IMR-90 (cell line): ENCODE measurements at regions of chr1 and their contacts with region 1.

Region 1: GRCh38 chr1:56578963-56579875 is at the start of gene PLPP3:
- DNase-seq: peak; percentile 94
- ATAC-seq: peak; percentile 89
- H3K4me3 ChIP-seq: peak within 1 kb of the TSS; percentile 81
- H3K27ac ChIP-seq: peak within 1 kb of the TSS; percentile 79
- H3K4me1 ChIP-seq: peaks cover 2% of the 10 kb centered on the region
- H3K27me3 ChIP-seq: no peaks in the 10 kb centered on the region
- CTCF ChIP-seq: peak; percentile 61
- POLR2A ChIP-seq: peak; percentile 90
- RAD21 ChIP-seq: peak; percentile 59
- total RNA-seq, gene PLPP3: 46.4 and 56.6 TPM in 2 replicates

Region 2: GRCh38 chr1:55277377-55278130 is 1301.7 kb before region 1 on chr1:
- CTCF ChIA-PET with region 1: interaction called, 3 read pairs
- POLR2A ChIA-PET with region 1: no interaction called
- dilution Hi-C with region 1: loop called (anchors 25 kb)
- in situ Hi-C with region 1: no loop called
- intact Hi-C with region 1: no loop called
- DNase-seq: peak; percentile 78
- ATAC-seq: peak; percentile 93
- H3K4me3 ChIP-seq: no peak overlapping the region
- H3K27ac ChIP-seq: no peak overlapping the region
- H3K4me1 ChIP-seq: peaks cover 6% of the 10 kb centered on the region; the same call in 1 of the 2 replicates
- H3K27me3 ChIP-seq: no peaks in the 10 kb centered on the region
- CTCF ChIP-seq: peak; percentile 82
- POLR2A ChIP-seq: no peak
- RAD21 ChIP-seq: peak; percentile 87

Region 3: GRCh38 chr1:55735106-55735505 is 844.1 kb before region 1 on chr1:
- CTCF ChIA-PET with region 1: no interaction called
- POLR2A ChIA-PET with region 1: no interaction called
- dilution Hi-C with region 1: no loop called
- in situ Hi-C with region 1: loop called (anchors 10 kb)
- intact Hi-C with region 1: no loop called
- DNase-seq: no peak
- ATAC-seq: peak; percentile 56
- H3K4me3 ChIP-seq: no peak overlapping the region
- H3K27ac ChIP-seq: peak overlapping the region; percentile 41; the same call in 1 of the 2 replicates
- H3K4me1 ChIP-seq: peaks cover 3% of the 10 kb centered on the region; the same call in 1 of the 2 replicates
- H3K27me3 ChIP-seq: no peaks in the 10 kb centered on the region
- CTCF ChIP-seq: no peak
- POLR2A ChIP-seq: no peak
- RAD21 ChIP-seq: no peak

Region 4: DNA sequence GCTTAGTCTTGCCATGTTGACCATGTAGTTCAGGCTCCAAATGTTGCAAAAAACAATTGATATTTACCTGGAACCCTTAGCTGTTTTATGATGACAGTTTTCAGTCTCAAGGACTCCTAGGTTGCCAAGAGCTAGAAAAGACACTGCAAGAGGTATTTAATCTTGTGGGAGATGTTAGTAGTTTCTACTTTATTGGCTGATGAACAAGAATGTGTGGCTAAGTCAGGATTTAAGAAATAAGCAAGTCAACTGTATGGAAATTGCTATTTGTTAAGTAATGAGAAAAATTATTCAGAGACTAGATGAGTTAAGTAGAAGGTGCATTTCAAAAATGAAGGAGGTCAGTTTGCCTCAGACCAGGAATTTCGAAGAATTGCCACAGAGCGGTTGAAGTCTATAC is 724.3 kb before region 1 on chr1:
- CTCF ChIA-PET with region 1: interaction called, 3 read pairs
- POLR2A ChIA-PET with region 1: no interaction called
- dilution Hi-C with region 1: no loop called
- in situ Hi-C with region 1: no loop called
- intact Hi-C with region 1: loop called (anchors 10 kb)
- DNase-seq: peak; percentile 54
- ATAC-seq: peak; percentile 79
- H3K4me3 ChIP-seq: no peak overlapping the region
- H3K27ac ChIP-seq: peak overlapping the region; percentile 71; the same call in 1 of the 2 replicates
- H3K4me1 ChIP-seq: peaks cover 9% of the 10 kb centered on the region
- H3K27me3 ChIP-seq: no peaks in the 10 kb centered on the region
- CTCF ChIP-seq: no peak
- POLR2A ChIP-seq: no peak
- RAD21 ChIP-seq: no peak

Region 5: GRCh38 chr1:56064705-56065104 is 514.5 kb before region 1 on chr1:
- CTCF ChIA-PET with region 1: no interaction called
- POLR2A ChIA-PET with region 1: no interaction called
- dilution Hi-C with region 1: no loop called
- in situ Hi-C with region 1: no loop called
- intact Hi-C with region 1: loop called (anchors 5 kb)
- DNase-seq: peak; percentile 61
- ATAC-seq: no peak; the same call in 1 of the 2 replicates
- H3K4me3 ChIP-seq: no peak overlapping the region
- H3K27ac ChIP-seq: no peak overlapping the region
- H3K4me1 ChIP-seq: peaks cover 11% of the 10 kb centered on the region
- H3K27me3 ChIP-seq: no peaks in the 10 kb centered on the region
- CTCF ChIP-seq: no peak
- POLR2A ChIP-seq: no peak
- RAD21 ChIP-seq: no peak

Region 6: GRCh38 chr1:56329956-56330355 is 249.3 kb before region 1 on chr1:
- CTCF ChIA-PET with region 1: no interaction called
- POLR2A ChIA-PET with region 1: no interaction called
- dilution Hi-C with region 1: no loop called
- in situ Hi-C with region 1: no loop called
- intact Hi-C with region 1: loop called (anchors 10 kb)
- DNase-seq: peak; percentile 17
- ATAC-seq: no peak; the same call in 1 of the 2 replicates
- H3K4me3 ChIP-seq: no peak overlapping the region
- H3K27ac ChIP-seq: no peak overlapping the region
- H3K4me1 ChIP-seq: peaks cover 26% of the 10 kb centered on the region
- H3K27me3 ChIP-seq: no peaks in the 10 kb centered on the region
- CTCF ChIP-seq: no peak
- POLR2A ChIP-seq: no peak
- RAD21 ChIP-seq: no peak

Region 7: DNA sequence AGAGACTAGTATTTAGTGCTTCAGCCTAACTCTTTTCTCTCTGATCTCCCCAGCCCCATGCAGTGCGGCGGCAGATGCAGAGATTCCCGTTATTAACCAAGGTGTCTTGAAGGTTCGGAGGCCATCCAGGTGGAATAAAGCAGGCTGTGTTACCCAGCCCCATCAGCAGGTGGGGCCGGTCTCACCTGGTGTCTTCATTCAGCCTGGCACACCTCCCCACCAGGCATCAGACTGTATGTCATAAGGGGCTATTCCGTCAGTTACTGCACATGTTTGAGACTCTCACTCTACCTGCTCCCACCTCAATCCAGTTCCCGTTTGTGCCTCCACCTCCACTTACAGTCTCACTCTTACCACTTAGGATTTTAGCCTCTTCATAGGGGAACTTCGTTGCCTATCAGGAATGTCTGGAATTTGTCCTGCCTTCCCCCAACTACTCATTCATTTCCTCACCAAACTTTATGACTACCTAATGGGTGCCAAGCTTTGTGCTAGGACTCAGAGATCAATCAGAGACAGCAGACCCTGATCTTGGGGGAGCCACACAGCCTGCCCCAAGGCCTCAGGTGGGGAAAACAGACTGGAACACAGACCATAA is 170.0 kb before region 1 on chr1:
- CTCF ChIA-PET with region 1: no interaction called
- POLR2A ChIA-PET with region 1: no interaction called
- dilution Hi-C with region 1: no loop called
- in situ Hi-C with region 1: no loop called
- intact Hi-C with region 1: no loop called
- DNase-seq: no peak
- ATAC-seq: no peak
- H3K4me3 ChIP-seq: no peak overlapping the region
- H3K27ac ChIP-seq: no peak overlapping the region
- H3K4me1 ChIP-seq: no peaks in the 10 kb centered on the region
- H3K27me3 ChIP-seq: no peaks in the 10 kb centered on the region
- CTCF ChIP-seq: no peak
- POLR2A ChIP-seq: no peak
- RAD21 ChIP-seq: no peak

Region 8: DNA sequence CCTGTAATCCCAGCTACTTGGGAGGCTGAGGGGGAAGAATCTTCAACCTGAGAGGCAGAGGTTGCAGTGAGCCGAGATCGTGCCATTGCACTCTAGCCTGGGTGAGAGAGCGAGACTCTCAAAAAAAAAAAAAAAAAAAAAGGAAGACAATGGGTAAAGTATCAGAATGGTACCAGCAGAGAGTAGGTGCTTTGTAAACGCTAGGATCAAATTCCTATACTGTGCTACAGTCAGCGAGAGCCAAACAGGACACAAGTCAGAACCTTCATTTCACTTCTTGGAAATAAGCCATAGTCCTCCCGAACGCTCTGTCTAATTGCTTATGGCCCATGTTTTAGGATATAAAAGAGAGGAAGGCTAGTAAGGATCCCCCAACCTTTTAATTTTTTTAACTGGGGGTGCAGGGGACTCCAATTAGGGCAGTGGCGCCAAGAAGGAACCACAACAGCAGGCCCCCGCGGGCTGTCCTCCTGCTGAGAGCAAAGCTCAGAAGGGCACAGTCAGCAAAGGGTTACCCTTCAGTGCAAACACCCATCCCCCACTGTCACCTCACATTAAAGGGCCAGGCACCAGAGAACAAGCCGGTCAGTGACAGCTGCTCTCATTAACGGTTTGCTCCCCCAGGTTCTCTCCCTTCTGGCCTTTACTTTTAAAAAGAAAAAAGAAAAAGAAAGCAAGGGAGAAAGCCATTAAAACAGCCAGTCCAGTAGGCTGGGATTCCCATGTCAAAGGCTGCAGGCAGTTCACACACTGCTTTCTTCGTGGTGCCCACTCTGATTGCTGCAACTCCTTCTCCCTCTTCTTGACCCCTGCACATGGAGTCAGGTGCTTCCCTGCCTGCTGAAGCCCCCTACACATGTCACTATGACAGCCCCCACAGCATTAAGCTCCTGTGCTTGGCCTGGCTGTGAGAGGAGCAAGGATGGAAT is 69.2 kb before region 1 on chr1:
- CTCF ChIA-PET with region 1: no interaction called
- POLR2A ChIA-PET with region 1: no interaction called
- dilution Hi-C with region 1: no loop called
- in situ Hi-C with region 1: no loop called
- intact Hi-C with region 1: loop called (anchors 5 kb)
- DNase-seq: no peak
- ATAC-seq: no peak
- H3K4me3 ChIP-seq: no peak overlapping the region
- H3K27ac ChIP-seq: no peak overlapping the region
- H3K4me1 ChIP-seq: peaks cover 14% of the 10 kb centered on the region; the same call in 1 of the 2 replicates
- H3K27me3 ChIP-seq: no peaks in the 10 kb centered on the region
- CTCF ChIP-seq: no peak
- POLR2A ChIP-seq: no peak
- RAD21 ChIP-seq: no peak

Region 9: DNA sequence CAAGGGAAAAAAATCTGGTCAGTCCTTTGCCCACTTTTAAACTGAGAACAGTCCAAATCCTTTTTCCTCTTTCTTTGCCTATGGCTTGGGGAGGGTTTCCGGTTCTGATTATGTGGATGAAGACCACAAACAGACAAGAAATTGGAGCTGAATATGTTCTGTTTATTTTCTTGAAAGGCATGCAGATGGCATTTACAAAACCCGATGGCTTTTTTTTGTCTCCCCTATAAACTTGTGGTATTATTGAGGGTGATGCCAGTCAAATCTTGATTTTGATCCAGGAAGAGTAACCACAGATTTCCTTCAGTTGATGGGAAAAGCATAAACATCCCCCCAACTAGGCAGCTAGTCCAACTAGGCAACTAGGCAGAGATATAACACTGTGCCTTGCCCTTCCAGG is 38.8 kb before region 1 on chr1:
- CTCF ChIA-PET with region 1: no interaction called
- POLR2A ChIA-PET with region 1: no interaction called
- dilution Hi-C with region 1: no loop called
- in situ Hi-C with region 1: no loop called
- intact Hi-C with region 1: no loop called
- DNase-seq: no peak
- ATAC-seq: no peak
- H3K4me3 ChIP-seq: no peak overlapping the region
- H3K27ac ChIP-seq: no peak overlapping the region
- H3K4me1 ChIP-seq: peaks cover 5% of the 10 kb centered on the region; the same call in 1 of the 2 replicates
- H3K27me3 ChIP-seq: no peaks in the 10 kb centered on the region
- CTCF ChIP-seq: no peak
- POLR2A ChIP-seq: no peak
- RAD21 ChIP-seq: no peak